Endothelial cell of umbilical vein (primary cell): ENCODE measurements at regions of chr7 and their contacts with region 1.

Region 1: GRCh38 chr7:106679153-106679931 is 18.4 kb upstream of the CCDC71L start:
- DNase-seq: peak; percentile 73
- H3K4me3 ChIP-seq: no peak overlapping the region
- H3K27ac ChIP-seq: peak overlapping the region; percentile 47
- H3K4me1 ChIP-seq: peaks cover 22% of the 10 kb centered on the region
- H3K27me3 ChIP-seq: no peaks in the 10 kb centered on the region
- CTCF ChIP-seq: no peak
- POLR2A ChIP-seq: no peak

Region 2: GRCh38 chr7:106731187-106731586 is 51.8 kb after region 1 on chr7:
- CTCF ChIA-PET with region 1: interaction called, 8 read pairs
- POLR2A ChIA-PET with region 1: no interaction called
- dilution Hi-C with region 1: no loop called
- intact Hi-C with region 1: loop called (anchors 1 kb)
- DNase-seq: peak; percentile 96
- H3K4me3 ChIP-seq: peak overlapping the region in 1 of 3 experiments; percentile 0
- H3K27ac ChIP-seq: peak overlapping the region; percentile 44
- H3K4me1 ChIP-seq: peaks cover 27% of the 10 kb centered on the region
- H3K27me3 ChIP-seq: no peaks in the 10 kb centered on the region
- CTCF ChIP-seq: no peak
- POLR2A ChIP-seq: no peak

Region 3: GRCh38 chr7:106757846-106758245 is 78.5 kb after region 1 on chr7:
- CTCF ChIA-PET with region 1: no interaction called
- POLR2A ChIA-PET with region 1: no interaction called
- dilution Hi-C with region 1: no loop called
- intact Hi-C with region 1: no loop called
- DNase-seq: peak; percentile 7
- H3K4me3 ChIP-seq: no peak overlapping the region
- H3K27ac ChIP-seq: no peak overlapping the region
- H3K4me1 ChIP-seq: no peaks in the 10 kb centered on the region
- H3K27me3 ChIP-seq: no peaks in the 10 kb centered on the region
- CTCF ChIP-seq: no peak
- POLR2A ChIP-seq: no peak

Region 4: GRCh38 chr7:106901828-106902441 is 222.6 kb after region 1 on chr7:
- CTCF ChIA-PET with region 1: no interaction called
- POLR2A ChIA-PET with region 1: no interaction called
- dilution Hi-C with region 1: no loop called
- intact Hi-C with region 1: no loop called
- DNase-seq: no peak
- H3K4me3 ChIP-seq: no peak overlapping the region
- H3K27ac ChIP-seq: no peak overlapping the region
- H3K4me1 ChIP-seq: no peaks in the 10 kb centered on the region
- H3K27me3 ChIP-seq: no peaks in the 10 kb centered on the region
- CTCF ChIP-seq: no peak
- POLR2A ChIP-seq: no peak